ENCODE measurements at regions of chr4 and their contacts with region 1.

Region 1: GRCh38 chr4:147407261-147408045 is 73.4 kb upstream of the EDNRA start:
- DNase-seq: peak; percentile 59
- ATAC-seq: peak; percentile 91
- H3K4me3 Mint-ChIP-seq: no peak overlapping the region
- H3K27ac Mint-ChIP-seq: peak overlapping the region; percentile 27; the same call in 1 of the 2 replicates
- H3K4me1 Mint-ChIP-seq: no peaks in the 10 kb centered on the region
- H3K27me3 Mint-ChIP-seq: no peaks in the 10 kb centered on the region; the same call in 1 of the 2 replicates
- CTCF ChIP-seq: peak; percentile 90

Region 2: GRCh38 chr4:147378779-147379178 is 28.7 kb before region 1 on chr4:
- CTCF ChIA-PET with region 1: interaction called, 15 read pairs
- POLR2A ChIA-PET with region 1: no interaction called
- DNase-seq: no peak
- ATAC-seq: peak; percentile 98
- H3K4me3 Mint-ChIP-seq: no peak overlapping the region
- H3K27ac Mint-ChIP-seq: peak overlapping the region; percentile 46; the same call in 1 of the 2 replicates
- H3K4me1 Mint-ChIP-seq: peaks cover 13% of the 10 kb centered on the region
- H3K27me3 Mint-ChIP-seq: no peaks in the 10 kb centered on the region; the same call in 1 of the 2 replicates
- CTCF ChIP-seq: no peak

Region 3: GRCh38 chr4:147590249-147590920 is 182.9 kb after region 1 on chr4:
- CTCF ChIA-PET with region 1: interaction called, 16 read pairs
- POLR2A ChIA-PET with region 1: no interaction called
- DNase-seq: peak; percentile 70
- ATAC-seq: peak; percentile 72
- H3K4me3 Mint-ChIP-seq: no peak overlapping the region
- H3K27ac Mint-ChIP-seq: no peak overlapping the region
- H3K4me1 Mint-ChIP-seq: peaks cover 23% of the 10 kb centered on the region
- H3K27me3 Mint-ChIP-seq: no peaks in the 10 kb centered on the region
- CTCF ChIP-seq: peak; percentile 51